Left colon (tissue), 2 donors: ENCODE measurements at regions of chr3 and their contacts with region 1.

Region 1: DNA sequence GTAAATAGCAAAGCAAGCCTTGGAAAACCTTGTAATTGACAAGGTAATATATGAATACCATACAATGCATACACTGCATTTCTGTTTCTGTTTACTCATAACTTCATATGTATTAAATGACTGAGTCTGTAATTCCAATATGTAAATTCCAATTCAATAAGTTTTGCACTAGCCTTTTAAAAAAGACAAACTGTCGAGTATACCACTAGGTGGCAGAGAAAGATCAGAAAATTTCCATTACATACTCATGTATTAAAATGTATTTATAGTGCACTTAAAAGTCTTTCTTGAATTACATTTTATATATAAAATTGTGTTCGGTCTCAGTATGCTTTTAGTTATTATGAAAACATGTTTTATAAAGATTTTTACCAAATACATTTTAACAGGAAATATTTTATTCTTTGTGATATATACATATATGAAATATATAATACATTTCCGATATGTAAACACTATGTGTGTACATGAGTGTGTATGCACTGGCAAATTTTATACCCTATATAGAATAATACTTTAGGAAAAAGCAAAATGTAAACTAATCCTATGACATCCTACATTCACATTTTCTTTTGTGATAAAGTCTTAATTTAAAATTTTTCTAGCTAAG is 216.8 kb downstream of the VGLL3 start:
- DNase-seq: no peak
- ATAC-seq: no peak

Region 2: GRCh38 chr3:86929046-86929803 is 155.0 kb after region 1 on chr3:
- intact Hi-C with region 1: no loop called
- DNase-seq: no peak
- ATAC-seq: no peak

Region 3: DNA sequence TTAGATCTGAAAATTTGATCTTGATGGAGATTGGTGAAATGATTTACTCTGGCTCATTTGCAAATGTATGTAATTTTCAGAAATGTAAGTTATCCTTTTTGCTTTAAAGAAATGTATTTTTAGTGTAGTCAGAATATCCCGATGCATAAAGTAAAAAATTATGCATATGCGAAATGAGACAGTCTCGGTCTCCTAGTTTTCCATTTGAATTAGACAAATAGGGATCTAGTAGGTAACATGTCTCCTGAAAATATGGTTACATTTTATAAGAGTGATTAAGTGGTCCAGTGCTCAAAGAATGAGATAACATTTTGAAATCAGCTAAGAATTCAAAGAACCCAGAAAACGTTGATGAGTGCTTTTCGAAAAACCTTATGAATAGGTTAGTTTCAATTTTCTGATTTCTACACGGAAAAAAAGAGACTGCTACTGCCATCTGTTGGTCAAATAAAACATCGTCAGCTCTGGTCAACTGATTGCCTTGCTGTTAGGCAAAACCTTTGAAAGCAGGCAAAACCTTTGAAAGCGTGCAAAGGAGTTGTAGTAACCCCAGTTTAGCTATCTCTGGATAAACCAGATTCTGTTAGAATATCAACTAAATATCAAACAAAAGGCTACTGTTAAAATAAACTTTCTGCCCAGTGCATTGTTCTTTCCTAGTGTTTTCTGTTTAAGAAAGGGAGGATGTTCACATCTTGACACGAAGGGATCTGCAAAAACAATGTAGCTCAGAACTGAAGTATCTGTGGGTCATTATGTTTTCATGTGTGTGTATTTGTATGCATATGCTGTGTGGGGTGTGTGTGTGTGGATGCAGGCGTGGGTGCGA is 393.7 kb after region 1 on chr3:
- intact Hi-C with region 1: loop called in 1 of 2 experiments (anchors 10 kb)
- DNase-seq: peak in 1 of 2 donors; percentile 7
- ATAC-seq: peak; percentile 37

Region 4: GRCh38 chr3:87227104-87227834 is 453.1 kb after region 1 on chr3 and contains the start of gene CHMP2B:
- intact Hi-C with region 1: no loop called
- DNase-seq: peak; percentile 92 to 95
- ATAC-seq: peak; percentile 94
- total RNA-seq, gene CHMP2B: 79.0 to 103 TPM